Heart right ventricle (tissue), 16 donors: ENCODE measurements at regions of chr20 and their contacts with region 1.

Region 1: DNA sequence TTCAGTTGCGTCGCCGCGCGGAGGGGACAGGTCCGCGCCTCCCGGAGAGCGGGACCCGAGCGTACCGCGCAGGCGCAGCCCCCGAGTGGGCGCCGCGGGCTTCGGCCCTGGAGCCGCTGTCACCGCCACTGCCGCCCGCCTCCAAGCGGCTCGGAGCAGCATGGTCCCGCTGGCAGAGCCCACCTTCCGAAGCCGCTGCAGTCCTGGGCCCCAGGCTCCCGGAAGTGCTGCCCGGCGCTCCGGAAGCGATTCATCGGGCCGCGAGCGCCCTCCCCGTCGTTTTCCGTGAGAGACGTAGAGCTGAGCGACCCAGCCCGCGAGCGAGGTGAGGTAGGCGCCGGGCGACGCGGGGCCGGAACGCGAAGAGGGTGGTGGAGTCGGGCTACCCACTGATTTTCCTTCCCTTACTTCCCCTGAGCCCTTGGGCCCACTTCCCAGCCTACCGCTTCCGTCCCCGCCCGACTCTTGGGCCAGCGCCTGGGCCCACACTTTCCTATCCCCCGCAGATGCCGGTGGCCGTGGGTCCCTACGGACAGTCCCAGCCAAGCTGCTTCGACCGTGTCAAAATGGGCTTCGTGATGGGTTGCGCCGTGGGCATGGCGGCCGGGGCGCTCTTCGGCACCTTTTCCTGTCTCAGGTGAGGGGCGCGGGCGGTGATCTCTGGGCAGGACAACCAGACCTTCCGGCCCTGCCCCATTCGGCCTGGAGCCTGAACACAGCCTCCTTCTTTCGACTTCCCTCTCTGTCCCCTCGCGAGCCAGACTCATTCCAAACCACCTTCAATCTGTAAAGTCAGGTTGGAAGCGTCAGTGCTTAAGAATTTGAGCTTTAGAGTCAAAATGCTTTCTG is at the starts of genes NFS1 and ROMO1:
- DNase-seq: peak; percentile 85 to 88
- ATAC-seq: peak; percentile 93 to 97 (median 94)
- H3K4me3 ChIP-seq: peak within 1 kb of the TSS; percentile 64 to 99 (median 90)
- H3K27ac ChIP-seq: peak within 1 kb of the TSS; percentile 76 to 95 (median 90)
- H3K4me1 ChIP-seq: peaks cover 5 to 40% (median 22%) of the 10 kb centered on the region in 9 donors
- H3K27me3 ChIP-seq: no peaks in the 10 kb centered on the region
- CTCF ChIP-seq: peak in 6 of 9 donors; percentile 12 to 46 (median 38)
- total RNA-seq, gene NFS1: 41.8 to 69.0 (median 59.3) TPM
- total RNA-seq, gene ROMO1: 128 to 193 (median 156) TPM

Region 2: DNA sequence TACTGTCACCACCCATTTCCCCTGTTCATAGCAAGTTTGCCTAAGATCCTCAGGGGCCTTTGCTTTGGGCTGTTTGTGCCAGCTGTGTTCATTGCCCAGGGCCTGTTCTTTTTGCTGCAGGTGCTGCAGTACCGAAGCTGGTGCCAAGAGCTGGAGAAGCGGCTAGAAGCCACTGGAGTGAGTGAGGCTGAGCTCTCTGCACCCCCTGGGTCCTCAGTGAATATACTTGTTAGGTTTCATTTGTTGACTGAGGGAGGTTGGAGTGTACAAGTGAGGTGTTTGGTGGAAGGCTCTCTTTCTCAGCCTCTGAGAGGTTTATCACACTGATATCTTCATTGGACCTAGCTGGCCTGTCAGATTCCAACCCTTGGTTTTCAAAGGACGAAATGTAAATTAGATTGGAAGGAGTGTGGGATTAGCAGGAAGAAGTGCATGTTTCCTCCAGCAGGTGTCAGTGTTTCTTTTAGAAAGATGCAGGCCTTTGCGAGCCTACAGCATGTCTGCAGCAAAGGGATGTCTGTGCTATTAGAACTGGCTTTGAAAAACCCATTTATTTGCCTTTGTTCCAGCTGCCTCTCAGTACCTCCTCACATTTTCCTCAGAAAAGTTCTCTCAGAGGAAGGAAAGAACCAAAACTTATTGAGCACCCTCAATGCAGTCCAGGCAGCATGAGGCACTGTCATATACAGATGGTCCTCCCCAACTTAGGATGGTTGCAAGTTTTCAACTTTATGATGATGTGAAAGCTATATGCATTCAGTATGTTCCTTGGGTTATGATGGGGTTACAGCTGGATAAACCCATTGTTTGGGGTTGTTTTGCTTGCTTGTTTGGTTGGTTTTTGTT is 235.7 kb before region 1 on chr20:
- intact Hi-C with region 1: loop called in 2 of 10 experiments (anchors 10 kb)
- DNase-seq: peak in 1 of 2 donors; percentile 63
- ATAC-seq: peak; percentile 64 to 81 (median 72)
- H3K4me3 ChIP-seq: no peak overlapping the region
- H3K27ac ChIP-seq: no peak overlapping the region
- H3K4me1 ChIP-seq: no peaks in the 10 kb centered on the region
- H3K27me3 ChIP-seq: no peaks in the 10 kb centered on the region
- CTCF ChIP-seq: peak; percentile 57 to 85 (median 81)

Region 3: DNA sequence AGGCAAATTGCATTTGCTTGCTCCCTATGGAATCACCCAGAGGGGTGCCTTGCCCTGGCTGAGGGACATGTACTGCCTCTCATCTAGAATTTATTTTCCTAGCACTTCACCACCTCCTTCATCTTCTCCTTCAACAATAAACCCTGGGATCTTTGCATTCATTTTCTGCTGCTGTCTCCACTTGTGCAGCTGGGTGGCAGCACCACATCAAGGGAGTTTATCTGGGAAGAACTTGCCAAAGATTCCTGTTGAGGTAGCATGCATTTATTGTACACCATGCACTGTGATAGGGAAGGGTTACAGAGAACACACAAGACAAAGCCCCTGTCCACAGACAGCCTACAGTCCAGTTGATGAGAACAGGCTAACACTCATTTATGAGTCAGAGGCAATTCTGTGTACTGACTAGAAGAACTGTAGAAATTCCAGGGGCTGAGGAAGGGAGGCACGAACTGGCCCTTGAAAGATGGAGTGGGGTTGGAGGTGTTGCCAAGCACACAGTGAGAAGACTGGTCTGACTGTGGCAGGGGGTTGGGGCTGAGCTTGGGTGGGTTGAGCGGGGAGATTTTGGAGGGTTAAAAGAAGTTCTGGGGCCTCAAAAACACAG is 187.4 kb before region 1 on chr20:
- intact Hi-C with region 1: loop called in 1 of 10 experiments (anchors 5 kb)
- DNase-seq: no peak
- ATAC-seq: peak in 4 of 8 donors; percentile 28 to 45 (median 40)
- H3K4me3 ChIP-seq: no peak overlapping the region
- H3K27ac ChIP-seq: no peak overlapping the region
- H3K4me1 ChIP-seq: peaks cover 0 to 6% (median 0%) of the 10 kb centered on the region in 9 donors
- H3K27me3 ChIP-seq: no peaks in the 10 kb centered on the region
- CTCF ChIP-seq: peak; percentile 41 to 68 (median 55)

Region 4: DNA sequence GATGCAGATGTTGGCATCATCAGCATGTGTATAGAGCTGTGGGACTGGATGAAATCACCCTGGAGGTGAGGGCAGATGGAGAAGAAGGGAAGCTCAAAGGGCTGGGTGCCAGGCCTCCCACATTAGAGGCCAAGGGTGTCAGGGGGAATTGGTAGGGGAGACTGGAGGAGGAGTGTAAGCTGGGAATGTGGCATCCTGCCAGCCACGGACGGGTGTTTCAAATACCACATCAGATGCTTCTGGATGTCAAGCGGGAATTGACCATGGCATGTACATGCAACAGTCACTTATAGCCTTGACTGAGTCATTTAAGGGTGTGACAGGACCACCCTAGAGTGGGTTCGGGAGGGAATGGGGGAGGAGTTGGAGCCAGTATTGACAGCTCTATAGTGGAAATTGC is 147.8 kb before region 1 on chr20:
- intact Hi-C with region 1: loop called in 1 of 10 experiments (anchors 10 kb)
- DNase-seq: no peak
- ATAC-seq: no peak
- H3K4me3 ChIP-seq: no peak overlapping the region
- H3K27ac ChIP-seq: no peak overlapping the region
- H3K4me1 ChIP-seq: no peaks in the 10 kb centered on the region
- H3K27me3 ChIP-seq: no peaks in the 10 kb centered on the region
- CTCF ChIP-seq: no peak

Region 5: DNA sequence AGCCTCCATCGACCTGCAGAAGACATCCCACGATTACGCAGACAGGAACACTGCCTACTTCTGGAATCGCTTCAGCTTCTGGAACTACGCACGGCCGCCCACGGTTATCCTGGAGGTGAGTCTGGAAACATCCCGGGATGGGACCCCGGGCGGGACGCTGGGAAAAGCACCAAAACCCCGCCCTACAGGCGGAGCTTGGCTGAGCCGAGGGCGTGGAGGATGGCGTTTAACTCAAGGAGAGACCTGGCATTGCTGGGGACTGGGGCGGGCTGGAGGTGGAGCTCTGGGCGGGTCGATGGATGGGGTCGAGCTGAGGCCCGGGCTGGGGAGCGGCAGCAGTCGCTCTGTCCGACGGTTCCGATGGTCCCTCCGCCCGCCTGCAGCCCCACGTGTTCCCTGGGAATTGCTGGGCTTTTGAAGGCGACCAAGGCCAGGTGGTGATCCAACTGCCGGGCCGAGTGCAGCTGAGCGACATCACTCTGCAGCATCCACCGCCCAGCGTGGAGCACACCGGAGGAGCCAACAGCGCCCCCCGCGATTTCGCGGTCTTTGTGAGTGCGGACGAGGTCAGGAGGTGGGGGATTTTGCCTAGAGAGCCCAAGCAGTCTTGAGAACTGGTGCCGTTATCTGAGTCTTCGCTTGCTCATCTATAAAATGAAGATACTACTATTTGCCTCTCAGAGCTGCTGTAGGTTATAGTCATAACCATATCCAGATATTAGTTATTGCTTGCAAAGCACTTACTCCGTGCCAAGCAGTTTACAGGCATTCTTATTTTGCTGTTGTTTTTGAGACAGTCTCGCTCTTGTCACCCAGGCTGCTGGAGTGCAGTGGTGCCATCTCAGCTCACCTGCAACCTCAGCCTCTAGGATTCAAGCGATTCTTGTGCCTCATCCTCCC is 79.9 kb before region 1 on chr20:
- intact Hi-C with region 1: loop called in 1 of 10 experiments (anchors 10 kb)
- DNase-seq: peak; percentile 79 to 83
- ATAC-seq: peak in 7 of 8 donors; percentile 10 to 48 (median 25)
- H3K4me3 ChIP-seq: peak overlapping the region; percentile 23 to 80 (median 54)
- H3K27ac ChIP-seq: peak overlapping the region in 4 of 10 donors; percentile 19 to 94 (median 46)
- H3K4me1 ChIP-seq: peaks cover 19 to 44% (median 36%) of the 10 kb centered on the region in 9 donors
- H3K27me3 ChIP-seq: peaks cover 0 to 7% (median 0%) of the 10 kb centered on the region in 7 donors
- CTCF ChIP-seq: peak in 4 of 9 donors; percentile 35 to 45 (median 40)

Region 6: GRCh38 chr20:35726759-35727711 is 27.7 kb after region 1 on chr20:
- intact Hi-C with region 1: loop called in 1 of 10 experiments (anchors 5 kb)
- DNase-seq: no peak
- ATAC-seq: no peak
- H3K4me3 ChIP-seq: no peak overlapping the region
- H3K27ac ChIP-seq: no peak overlapping the region
- H3K4me1 ChIP-seq: peaks cover 3 to 57% (median 40%) of the 10 kb centered on the region in 9 donors
- H3K27me3 ChIP-seq: no peaks in the 10 kb centered on the region
- CTCF ChIP-seq: no peak

Region 7: GRCh38 chr20:35741892-35742740 is 42.8 kb after region 1 on chr20 and contains the start of gene RBM39:
- intact Hi-C with region 1: loop called in 1 of 10 experiments (anchors 5 kb)
- DNase-seq: peak; percentile 99 to 100
- ATAC-seq: peak; percentile 94 to 97 (median 96)
- H3K4me3 ChIP-seq: peak within 1 kb of the TSS; percentile 82 to 97 (median 86)
- H3K27ac ChIP-seq: peak within 1 kb of the TSS; percentile 97 to 100 (median 99)
- H3K4me1 ChIP-seq: peaks cover 3 to 60% (median 45%) of the 10 kb centered on the region in 9 donors
- H3K27me3 ChIP-seq: no peaks in the 10 kb centered on the region
- CTCF ChIP-seq: peak in 8 of 9 donors; percentile 39 to 75 (median 56)
- total RNA-seq, gene RBM39: 110 to 170 (median 124) TPM

Region 8: GRCh38 chr20:35771689-35772562 is 72.6 kb after region 1 on chr20 and contains the start of gene PHF20:
- intact Hi-C with region 1: no loop called
- DNase-seq: peak; percentile 99 to 100
- ATAC-seq: peak; percentile 87 to 92 (median 92)
- H3K4me3 ChIP-seq: peak within 1 kb of the TSS; percentile 68 to 92 (median 76)
- H3K27ac ChIP-seq: peak within 1 kb of the TSS; percentile 78 to 97 (median 94)
- H3K4me1 ChIP-seq: peaks cover 23 to 86% (median 74%) of the 10 kb centered on the region in 9 donors
- H3K27me3 ChIP-seq: no peaks in the 10 kb centered on the region
- CTCF ChIP-seq: no peak
- total RNA-seq, gene PHF20: 31.9 to 44.7 (median 37.8) TPM